Right ventricle myocardium superior (tissue), 1 donor: ENCODE measurements at regions of chr18 and their contacts with region 1.

Region 1: GRCh38 chr18:52160652-52161051 is 179.3 kb upstream of the DCC start:
- DNase-seq: no peak
- ATAC-seq: no peak

Region 2: GRCh38 chr18:52082246-52082645 is 78.4 kb before region 1 on chr18:
- intact Hi-C with region 1: loop called (anchors 10 kb)
- DNase-seq: no peak
- ATAC-seq: no peak